Aorta (tissue), 5 donors: ENCODE measurements at regions of chr3 and their contacts with region 1.

Region 1: DNA sequence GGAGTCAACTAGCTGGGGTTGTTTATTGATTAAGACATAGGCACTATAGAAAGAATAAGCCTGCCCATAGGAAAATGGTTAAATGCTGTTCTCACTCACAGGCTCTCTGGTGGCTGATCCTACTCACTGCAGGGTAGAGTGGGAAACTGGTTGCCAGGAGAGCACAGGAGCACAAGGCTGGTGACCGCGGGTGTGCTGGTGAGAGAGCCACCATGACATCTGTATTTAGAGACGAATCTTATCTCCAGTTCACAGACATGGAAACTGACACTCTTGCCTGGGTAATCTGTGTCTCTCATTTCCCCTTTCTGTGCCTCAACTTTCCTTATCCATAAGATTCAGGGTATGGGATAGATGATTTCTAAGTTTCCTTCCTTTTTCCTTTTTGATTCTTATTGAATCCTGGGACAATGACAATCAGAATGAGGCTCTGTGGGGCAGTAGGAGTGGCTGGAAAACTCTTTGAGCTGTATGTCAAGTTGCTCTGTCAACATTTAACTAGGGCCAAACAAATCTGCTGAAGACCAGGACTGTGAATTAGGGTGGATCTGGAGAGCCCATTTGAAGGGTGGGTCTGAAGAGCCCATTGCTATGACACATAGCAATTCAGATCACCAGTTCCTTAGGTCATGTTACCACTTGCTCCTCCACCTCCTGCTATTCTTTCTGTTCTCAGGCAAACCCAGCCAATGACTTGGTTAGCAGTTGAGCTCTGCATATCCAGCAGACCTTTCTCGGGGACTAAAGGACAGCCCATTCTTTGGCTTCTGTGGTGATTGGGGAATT is 286.1 kb upstream of the TBL1XR1 start:
- DNase-seq: no peak
- ATAC-seq: no peak
- H3K4me3 ChIP-seq: no peak overlapping the region
- H3K27ac ChIP-seq: peak overlapping the region in 1 of 2 donors; percentile 22
- H3K4me1 ChIP-seq: peaks cover 0 to 5% of the 10 kb centered on the region in 2 donors
- H3K27me3 ChIP-seq: no peaks in the 10 kb centered on the region

Region 2: GRCh38 chr3:177144923-177145780 is 338.2 kb before region 1 on chr3:
- intact Hi-C with region 1: no loop called
- DNase-seq: no peak
- ATAC-seq: no peak
- H3K4me3 ChIP-seq: no peak overlapping the region
- H3K27ac ChIP-seq: no peak overlapping the region
- H3K4me1 ChIP-seq: peaks cover 2 to 19% of the 10 kb centered on the region in 2 donors
- H3K27me3 ChIP-seq: no peaks in the 10 kb centered on the region

Region 3: DNA sequence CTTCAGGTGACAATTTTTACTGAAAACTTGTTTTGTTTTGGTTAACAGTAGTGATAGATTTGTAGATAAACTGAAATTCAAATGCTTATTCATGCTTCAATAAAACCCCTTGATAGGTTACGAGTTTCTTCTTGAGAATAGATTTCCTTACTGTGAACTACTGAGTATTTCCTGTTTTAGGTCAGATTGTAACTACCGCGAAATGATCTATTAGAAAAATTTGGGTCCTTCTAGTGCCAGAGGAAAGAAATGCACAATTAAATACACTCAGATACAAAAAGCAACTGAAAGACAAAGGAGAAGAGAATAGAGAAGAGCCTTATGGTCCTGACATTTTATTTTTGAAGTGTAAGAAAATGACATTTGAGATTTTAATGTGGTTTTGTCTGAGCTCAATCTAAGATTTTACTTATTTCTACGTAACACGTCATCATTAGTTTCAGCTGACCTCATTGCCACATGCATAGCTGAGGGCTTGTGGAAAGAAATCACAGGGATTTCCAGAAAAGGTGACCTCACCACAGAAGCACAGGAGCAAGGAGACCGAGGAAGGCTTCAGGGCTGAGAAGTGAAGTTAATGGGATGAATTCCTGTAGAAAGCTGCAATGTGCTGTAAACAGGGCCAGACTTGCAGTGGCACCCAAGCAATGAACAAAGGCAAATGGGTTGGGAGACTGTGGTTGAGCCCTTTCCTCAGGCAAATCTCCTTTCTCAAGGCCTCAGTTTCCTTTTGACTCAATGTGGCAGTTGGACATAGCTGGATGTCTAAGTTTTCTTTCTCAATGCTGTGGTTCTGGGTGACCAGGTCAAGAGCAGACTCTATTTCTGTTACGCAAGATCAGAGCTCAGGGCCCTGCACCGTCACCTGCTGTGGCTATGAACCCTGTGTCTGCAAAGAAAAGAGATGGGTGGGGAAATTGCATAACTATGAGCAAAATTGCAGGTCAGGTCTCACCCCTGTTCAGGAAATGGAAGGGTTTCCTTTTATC is 34.1 kb before region 1 on chr3:
- intact Hi-C with region 1: no loop called
- DNase-seq: no peak
- ATAC-seq: no peak
- H3K4me3 ChIP-seq: no peak overlapping the region
- H3K27ac ChIP-seq: no peak overlapping the region
- H3K4me1 ChIP-seq: peaks cover 0 to 2% of the 10 kb centered on the region in 2 donors
- H3K27me3 ChIP-seq: no peaks in the 10 kb centered on the region

Region 4: GRCh38 chr3:177597311-177598096 is 114.1 kb after region 1 on chr3:
- intact Hi-C with region 1: loop called in 1 of 2 experiments (anchors 10 kb)
- DNase-seq: peak in 1 of 2 donors; percentile 62
- ATAC-seq: peak; percentile 71
- H3K4me3 ChIP-seq: no peak overlapping the region
- H3K27ac ChIP-seq: peak overlapping the region; percentile 83 to 93
- H3K4me1 ChIP-seq: peaks cover 0 to 19% of the 10 kb centered on the region in 2 donors
- H3K27me3 ChIP-seq: no peaks in the 10 kb centered on the region